Activated naive CD8-positive, alpha-beta T cell treated with anti-CD3 and anti-CD28 coated beads, Interleukin-2, amount 10 ng/mL, durations not matched to agents 7 days and 5 days (primary cell): ENCODE measurements at regions of chr4 and their contacts with region 1.

Region 1: DNA sequence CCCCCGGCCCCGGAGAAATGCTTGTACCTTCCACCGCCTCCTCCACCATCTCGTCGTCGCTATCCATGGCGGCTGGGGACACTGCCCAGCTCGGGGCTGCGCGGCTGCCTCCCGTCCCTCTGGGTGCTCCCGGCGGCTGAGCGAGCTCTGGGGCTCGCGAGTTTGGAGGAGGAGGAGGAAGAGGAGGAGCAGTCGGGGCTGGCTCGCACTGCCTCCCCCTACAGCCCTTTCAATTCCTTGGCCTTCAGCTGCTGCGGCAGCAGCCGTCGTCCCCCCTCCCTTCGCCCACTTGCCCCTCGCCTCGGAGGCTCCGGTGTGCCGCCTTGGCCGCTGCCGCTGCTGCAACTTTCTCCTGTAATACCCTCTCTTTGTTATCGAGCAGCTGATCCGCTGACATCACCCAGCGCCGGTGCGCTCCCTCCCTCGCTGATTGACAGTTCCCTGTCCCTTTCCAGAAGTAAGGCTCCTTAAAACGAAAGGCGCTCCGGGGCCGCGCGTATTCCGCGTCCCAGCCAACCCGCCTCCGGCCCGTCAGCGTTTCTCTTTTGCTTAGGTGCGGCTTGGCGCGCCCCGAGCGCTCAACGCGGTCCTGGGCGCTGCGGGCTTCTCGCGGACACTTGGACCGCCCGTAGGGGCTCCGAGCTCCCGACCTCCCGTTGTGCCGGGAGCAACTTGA is at the start of gene SETD7:
- DNase-seq: no peak
- ATAC-seq: peak; percentile 44
- H3K4me3 Mint-ChIP-seq: peak within 1 kb of the TSS; percentile 94
- H3K27ac Mint-ChIP-seq: peak within 1 kb of the TSS; percentile 95
- H3K4me1 Mint-ChIP-seq: peaks cover 50% of the 10 kb centered on the region
- H3K27me3 Mint-ChIP-seq: peaks cover 4% of the 10 kb centered on the region
- total RNA-seq, gene SETD7: 9.4 to 10.1 TPM

Region 2: DNA sequence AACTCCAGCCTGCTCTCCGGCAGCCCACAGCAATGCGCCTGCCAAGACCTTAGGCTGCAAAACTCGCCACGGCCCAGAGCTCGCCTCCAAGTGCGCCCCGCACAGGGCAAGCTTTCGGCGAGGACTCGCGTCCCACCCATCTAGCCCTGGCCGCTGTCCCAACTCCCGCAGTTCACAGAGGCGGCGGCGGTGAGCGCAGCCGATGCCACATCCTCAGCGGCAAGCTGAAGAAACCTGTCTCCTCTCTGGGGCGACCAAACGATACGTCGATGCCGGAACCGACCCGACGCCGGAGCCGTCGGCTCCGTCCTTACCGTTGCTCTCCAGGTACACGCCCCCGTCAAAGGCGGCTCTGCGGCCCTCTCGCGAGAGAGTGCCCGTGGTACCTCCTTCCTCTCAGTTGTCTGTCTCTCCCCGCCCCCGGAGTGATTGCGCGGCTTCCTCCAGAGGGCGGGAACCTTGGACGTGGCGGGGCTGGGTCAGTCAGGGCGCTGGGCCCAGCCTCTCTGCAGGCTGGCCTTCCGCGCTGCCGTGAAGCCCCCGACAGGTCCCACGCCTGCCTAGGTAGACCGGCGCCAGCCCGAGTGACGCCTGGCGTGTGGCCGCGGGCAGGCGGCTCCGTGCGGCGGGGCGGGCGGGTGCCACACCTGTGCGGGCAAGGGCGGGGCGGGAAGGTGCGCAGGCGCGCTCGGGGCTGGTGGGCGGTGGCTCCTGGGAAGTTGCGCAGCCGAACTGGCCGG is 102.7 kb before region 1 on chr4:
- POLR2A ChIA-PET with region 1: interaction called, 20 read pairs
- DNase-seq: peak; percentile 97
- ATAC-seq: peak; percentile 90
- H3K4me3 Mint-ChIP-seq: peak overlapping the region; percentile 96
- H3K27ac Mint-ChIP-seq: peak overlapping the region; percentile 96
- H3K4me1 Mint-ChIP-seq: peaks cover 43% of the 10 kb centered on the region
- H3K27me3 Mint-ChIP-seq: no peaks in the 10 kb centered on the region